Panc1 (cell line): ENCODE measurements at regions of chr4 and their contacts with region 1.

Region 1: GRCh38 chr4:10157478-10158332 is 41.1 kb upstream of the WDR1 start:
- DNase-seq: peak; percentile 22
- ATAC-seq: peak; percentile 84
- H3K4me3 ChIP-seq: no peak overlapping the region
- H3K27ac ChIP-seq: no peak overlapping the region
- H3K4me1 ChIP-seq: no peaks in the 10 kb centered on the region
- H3K27me3 ChIP-seq: no peaks in the 10 kb centered on the region; the same call in none of the 2 replicates
- CTCF ChIP-seq: peak; percentile 80

Region 2: DNA sequence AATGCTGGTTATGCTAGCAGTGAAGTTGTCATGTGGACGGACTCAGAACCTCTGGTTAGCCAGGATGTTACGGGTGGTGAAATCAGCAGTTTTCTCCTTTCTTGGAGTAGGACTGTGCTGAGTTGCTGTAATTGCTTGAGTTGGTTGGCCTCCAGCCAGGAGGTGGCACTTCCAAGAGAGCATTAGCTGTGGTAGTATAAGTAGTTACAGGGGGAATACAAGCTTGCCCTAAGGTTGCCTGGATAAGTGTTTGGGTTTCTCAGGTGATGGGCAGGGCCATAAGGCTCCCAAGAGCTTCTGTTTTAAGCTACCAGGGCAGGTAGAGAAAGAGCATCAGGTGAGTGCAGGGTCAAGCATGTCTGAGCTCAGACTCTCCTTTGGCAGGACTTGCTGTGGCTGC is 196.5 kb after region 1 on chr4:
- CTCF ChIA-PET with region 1: no interaction called
- POLR2A ChIA-PET with region 1: no interaction called
- in situ Hi-C with region 1: no loop called
- intact Hi-C with region 1: no loop called
- DNase-seq: no peak
- ATAC-seq: no peak
- H3K4me3 ChIP-seq: no peak overlapping the region
- H3K27ac ChIP-seq: no peak overlapping the region
- H3K4me1 ChIP-seq: no peaks in the 10 kb centered on the region
- H3K27me3 ChIP-seq: no peaks in the 10 kb centered on the region; the same call in 1 of the 2 replicates
- CTCF ChIP-seq: no peak

Region 3: GRCh38 chr4:10403633-10404445 is 246.1 kb after region 1 on chr4:
- CTCF ChIA-PET with region 1: no interaction called
- POLR2A ChIA-PET with region 1: no interaction called
- in situ Hi-C with region 1: no loop called
- intact Hi-C with region 1: loop called (anchors 10 kb)
- DNase-seq: peak; percentile 10
- ATAC-seq: no peak
- H3K4me3 ChIP-seq: no peak overlapping the region
- H3K27ac ChIP-seq: no peak overlapping the region
- H3K4me1 ChIP-seq: no peaks in the 10 kb centered on the region
- H3K27me3 ChIP-seq: no peaks in the 10 kb centered on the region
- CTCF ChIP-seq: peak; percentile 53; the same call in 1 of the 2 replicates

Region 4: GRCh38 chr4:10554694-10555093 is 397.0 kb after region 1 on chr4:
- CTCF ChIA-PET with region 1: no interaction called
- POLR2A ChIA-PET with region 1: no interaction called
- in situ Hi-C with region 1: no loop called
- intact Hi-C with region 1: loop called (anchors 2 kb)
- DNase-seq: peak; percentile 42
- ATAC-seq: peak; percentile 69
- H3K4me3 ChIP-seq: no peak overlapping the region
- H3K27ac ChIP-seq: no peak overlapping the region
- H3K4me1 ChIP-seq: no peaks in the 10 kb centered on the region
- H3K27me3 ChIP-seq: no peaks in the 10 kb centered on the region; the same call in none of the 2 replicates
- CTCF ChIP-seq: peak; percentile 73